ENCODE measurements at regions of chr11 and their contacts with region 1.

Region 1: DNA sequence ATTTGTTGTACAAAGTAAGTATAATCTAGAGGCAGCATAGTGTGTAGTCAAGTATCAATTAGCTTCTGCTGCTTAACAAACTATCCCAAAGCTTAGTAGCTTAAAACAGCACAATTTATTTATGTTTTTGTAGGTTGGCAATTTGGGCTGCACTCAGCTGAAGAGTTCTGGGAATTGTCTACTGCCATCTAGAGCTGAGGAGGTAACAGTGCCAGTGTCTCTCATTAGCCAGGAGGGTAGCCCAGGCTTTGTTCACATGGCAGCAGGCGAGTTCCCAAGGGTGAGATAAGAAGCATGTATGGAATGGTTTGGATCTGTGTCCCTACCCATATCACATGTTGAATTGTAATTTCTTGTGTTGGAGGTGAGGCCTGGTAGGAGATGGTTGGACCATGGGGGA is 45.8 kb upstream of the SLN start:
- DNase-seq: no peak

Region 2: GRCh38 chr11:107705027-107705426 is 52.6 kb before region 1 on chr11:
- intact Hi-C with region 1: loop called in 1 of 2 experiments (anchors 5 kb)
- DNase-seq: no peak

Region 3: DNA sequence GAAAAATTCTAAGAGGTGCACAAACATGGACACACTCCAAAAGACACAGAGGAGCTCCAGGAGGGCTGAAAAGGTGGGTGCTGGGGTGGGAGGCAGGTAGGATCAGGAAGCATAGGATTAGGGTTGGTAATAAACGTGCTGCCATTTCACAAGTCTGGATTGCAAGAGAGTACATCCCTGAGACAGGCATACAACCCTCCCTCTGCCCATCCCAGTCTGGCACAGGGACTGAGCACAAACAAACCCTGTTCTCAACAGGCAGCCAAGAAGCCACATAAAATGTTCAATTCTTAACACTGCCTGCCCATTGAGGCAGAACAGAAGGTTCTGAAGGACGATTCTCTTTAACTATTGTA is 82.4 kb after region 1 on chr11:
- intact Hi-C with region 1: no loop called
- DNase-seq: no peak